Posterior vena cava (tissue), 2 donors: ENCODE measurements at regions of chr2 and their contacts with region 1.

Region 1: DNA sequence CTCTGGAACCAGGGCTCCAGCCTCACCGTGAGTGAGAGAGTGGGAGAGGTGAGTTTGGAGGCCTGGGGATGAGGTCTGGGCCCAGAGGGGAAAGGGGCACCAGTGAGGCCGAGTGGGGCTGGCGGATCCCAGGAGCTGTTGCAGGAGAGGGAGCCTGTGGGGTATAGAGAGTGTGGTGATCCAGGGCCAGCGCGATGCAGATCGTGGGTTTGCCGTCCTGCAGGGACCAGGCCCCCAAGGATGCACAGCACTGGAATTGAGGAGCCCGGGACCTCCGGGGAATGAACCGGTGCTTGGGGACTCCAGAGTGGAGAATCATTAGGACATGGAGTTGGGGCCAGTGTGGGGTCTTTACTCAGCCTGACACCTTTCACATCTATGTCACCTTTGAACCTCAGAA is 25.7 kb upstream of the RAB6D start:
- DNase-seq: no peak

Region 2: GRCh38 chr2:131535526-131535925 is 145.9 kb after region 1 on chr2:
- intact Hi-C with region 1: loop called in 1 of 2 experiments (anchors 5 kb)
- DNase-seq: no peak

Region 3: DNA sequence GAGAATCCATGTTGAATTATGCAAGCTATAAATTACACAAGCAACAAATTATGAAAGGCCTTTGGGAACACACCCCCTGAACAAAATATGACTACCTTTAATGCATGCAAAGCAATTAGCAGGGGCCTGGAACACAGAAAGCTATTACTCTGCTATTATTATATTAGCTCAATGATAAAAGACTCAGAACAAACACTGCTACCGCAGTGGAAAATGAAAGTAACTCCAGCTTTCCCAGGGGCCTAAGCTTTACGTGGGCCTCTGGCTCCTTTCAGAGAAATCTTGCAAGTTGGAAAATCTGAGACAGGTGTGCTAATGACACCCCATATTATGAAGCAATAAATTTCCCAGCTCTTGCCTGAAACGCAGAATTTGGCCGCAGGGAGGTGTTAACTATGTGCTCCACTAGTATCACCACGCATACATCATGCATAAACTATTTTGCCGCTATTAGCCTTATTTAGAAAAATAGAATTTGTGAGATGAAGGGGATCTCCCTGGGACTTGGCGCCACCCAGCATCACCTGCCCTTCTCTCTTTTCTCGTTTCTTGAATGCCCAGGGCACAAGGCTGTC is 1601.9 kb after region 1 on chr2:
- intact Hi-C with region 1: no loop called
- DNase-seq: no peak